CD4-positive, alpha-beta memory T cell (primary cell): ENCODE measurements at regions of chr3 and their contacts with region 1.

Region 1: GRCh38 chr3:45938864-45939263 is 4.4 kb upstream of the CXCR6 start:
- DNase-seq: peak; percentile 79 to 83 (median 80)
- H3K4me3 ChIP-seq: no peak overlapping the region
- H3K4me3 Mint-ChIP-seq: peak overlapping the region in 1 of 8 donors; percentile 14
- H3K27ac ChIP-seq: no peak overlapping the region
- H3K27ac Mint-ChIP-seq: peak overlapping the region in 3 of 7 donors; percentile 16 to 82 (median 77)
- H3K4me1 ChIP-seq: peaks cover 43% of the 10 kb centered on the region
- H3K4me1 Mint-ChIP-seq: peaks cover 27 to 52% (median 42%) of the 10 kb centered on the region in 4 donors
- H3K27me3 ChIP-seq: no peaks in the 10 kb centered on the region
- H3K27me3 Mint-ChIP-seq: no peaks in the 10 kb centered on the region

Region 2: DNA sequence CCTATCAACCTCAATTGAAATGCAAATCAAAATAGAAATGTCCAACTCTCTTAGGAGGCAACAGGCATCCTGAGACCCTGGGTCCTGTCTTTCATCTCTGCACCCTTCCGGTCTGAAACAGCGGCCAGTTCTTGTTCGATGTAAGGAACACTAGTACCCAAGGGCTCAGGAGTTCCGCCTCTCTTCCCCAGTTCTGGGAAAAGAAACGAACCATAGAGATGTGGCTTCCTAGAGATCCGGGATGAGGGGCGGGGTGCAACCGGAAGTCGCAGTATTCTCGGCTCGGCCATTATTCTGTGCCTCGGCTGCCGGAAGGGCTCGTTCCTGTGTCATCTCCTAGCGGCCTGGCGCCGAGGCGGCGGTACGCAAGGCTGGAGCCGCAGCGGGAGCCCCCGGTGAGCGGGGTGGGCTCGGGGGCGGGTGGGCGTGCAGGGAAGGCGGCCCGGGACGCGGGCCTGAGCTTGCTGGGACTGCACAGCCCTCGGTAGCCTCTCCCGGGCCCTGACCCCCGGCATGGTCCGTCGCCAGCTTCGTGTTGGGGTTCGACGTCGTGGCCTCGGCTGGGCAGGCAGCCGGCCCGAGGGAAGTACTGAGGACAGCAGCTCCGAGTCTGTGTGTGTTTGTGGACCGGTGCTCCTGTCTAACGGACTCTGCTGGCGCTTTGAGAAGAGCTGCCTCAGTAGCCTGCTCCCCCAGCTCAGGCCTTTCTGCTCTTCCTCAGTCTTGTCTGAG is 1313.9 kb before region 1 on chr3 and contains the start of gene ZNF197:
- CTCF ChIA-PET with region 1: no interaction called
- POLR2A ChIA-PET with region 1: no interaction called
- intact Hi-C with region 1: no loop called
- DNase-seq: peak; percentile 23 to 44 (median 42)
- H3K4me3 ChIP-seq: peak within 1 kb of the TSS; percentile 47 to 59
- H3K4me3 Mint-ChIP-seq: peak within 1 kb of the TSS; percentile 90 to 95 (median 92)
- H3K27ac ChIP-seq: peak within 1 kb of the TSS; percentile 49
- H3K27ac Mint-ChIP-seq: peak within 1 kb of the TSS; percentile 74 to 92 (median 87)
- H3K4me1 ChIP-seq: peaks cover 21% of the 10 kb centered on the region
- H3K4me1 Mint-ChIP-seq: peaks cover 20 to 47% (median 27%) of the 10 kb centered on the region in 4 donors
- H3K27me3 ChIP-seq: no peaks in the 10 kb centered on the region
- H3K27me3 Mint-ChIP-seq: no peaks in the 10 kb centered on the region
- total RNA-seq, gene ZNF197: 18.0 to 18.4 TPM

Region 3: DNA sequence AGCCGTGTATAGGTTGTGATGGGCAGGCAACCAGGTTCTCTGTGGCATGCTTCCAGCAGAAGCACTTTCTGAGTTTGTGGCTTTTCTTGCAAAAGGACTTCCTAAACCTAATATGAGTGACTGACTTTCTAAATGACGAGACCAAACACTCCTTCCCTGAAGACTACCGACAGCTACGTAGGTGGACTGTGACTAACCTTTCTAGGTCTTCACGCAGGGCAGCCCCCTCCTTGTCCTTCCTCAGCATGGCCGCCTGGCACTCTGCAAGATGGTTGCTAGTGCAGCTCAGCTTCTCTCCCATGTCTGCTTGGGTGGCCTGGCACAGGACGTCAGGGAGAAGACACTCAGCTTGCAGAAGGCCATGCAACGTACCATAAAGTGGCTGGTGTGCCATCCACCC is 25.3 kb after region 1 on chr3:
- CTCF ChIA-PET with region 1: interaction called, 153 read pairs
- POLR2A ChIA-PET with region 1: interaction called, 90 read pairs
- intact Hi-C with region 1: loop called (anchors 1 kb)
- DNase-seq: peak in 1 of 5 donors; percentile 60
- H3K4me3 ChIP-seq: no peak overlapping the region
- H3K4me3 Mint-ChIP-seq: peak overlapping the region in 6 of 8 donors; percentile 11 to 73 (median 38)
- H3K27ac ChIP-seq: peak overlapping the region; percentile 26
- H3K27ac Mint-ChIP-seq: peak overlapping the region; percentile 41 to 88 (median 75)
- H3K4me1 ChIP-seq: peaks cover 64% of the 10 kb centered on the region
- H3K4me1 Mint-ChIP-seq: peaks cover 35 to 81% (median 61%) of the 10 kb centered on the region in 4 donors
- H3K27me3 ChIP-seq: no peaks in the 10 kb centered on the region
- H3K27me3 Mint-ChIP-seq: no peaks in the 10 kb centered on the region

Region 4: GRCh38 chr3:45978006-45978761 is 39.3 kb after region 1 on chr3:
- CTCF ChIA-PET with region 1: interaction called, 10 read pairs
- POLR2A ChIA-PET with region 1: interaction called, 33 read pairs
- intact Hi-C with region 1: loop called (anchors 5 kb)
- DNase-seq: peak; percentile 38 to 73 (median 48)
- H3K4me3 ChIP-seq: peak overlapping the region in 1 of 2 donors; percentile 2
- H3K4me3 Mint-ChIP-seq: peak overlapping the region in 7 of 8 donors; percentile 38 to 93 (median 79)
- H3K27ac ChIP-seq: peak overlapping the region; percentile 10
- H3K27ac Mint-ChIP-seq: peak overlapping the region; percentile 31 to 99 (median 90)
- H3K4me1 ChIP-seq: peaks cover 91% of the 10 kb centered on the region
- H3K4me1 Mint-ChIP-seq: peaks cover 50 to 96% (median 74%) of the 10 kb centered on the region in 4 donors
- H3K27me3 ChIP-seq: no peaks in the 10 kb centered on the region
- H3K27me3 Mint-ChIP-seq: no peaks in the 10 kb centered on the region

Region 5: DNA sequence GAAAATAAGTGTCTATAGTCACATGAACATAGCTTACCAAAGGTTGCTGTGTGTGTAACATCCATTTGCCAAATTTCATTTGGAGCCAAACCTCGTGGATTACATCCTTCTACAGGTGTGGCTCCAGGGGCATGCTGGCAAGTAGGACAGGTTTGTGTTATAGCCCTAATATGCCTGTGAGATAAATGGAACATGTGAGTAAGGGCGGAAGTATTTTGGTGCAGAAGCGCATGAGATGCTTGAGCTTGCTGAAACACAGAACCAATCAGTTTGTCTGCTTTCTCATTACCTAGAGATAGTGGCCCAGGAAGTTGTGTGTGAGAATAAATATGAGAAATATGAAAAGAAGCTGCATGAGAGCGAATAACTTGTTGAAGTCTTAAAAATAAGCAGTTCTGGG is 110.3 kb after region 1 on chr3:
- CTCF ChIA-PET with region 1: interaction called, 5 read pairs
- POLR2A ChIA-PET with region 1: interaction called, 5 read pairs
- intact Hi-C with region 1: loop called (anchors 1 kb)
- DNase-seq: no peak
- H3K4me3 ChIP-seq: no peak overlapping the region
- H3K4me3 Mint-ChIP-seq: no peak overlapping the region
- H3K27ac ChIP-seq: no peak overlapping the region
- H3K27ac Mint-ChIP-seq: peak overlapping the region in 1 of 7 donors; percentile 47
- H3K4me1 ChIP-seq: peaks cover 23% of the 10 kb centered on the region
- H3K4me1 Mint-ChIP-seq: peaks cover 23 to 48% (median 30%) of the 10 kb centered on the region in 4 donors
- H3K27me3 ChIP-seq: no peaks in the 10 kb centered on the region
- H3K27me3 Mint-ChIP-seq: no peaks in the 10 kb centered on the region

Region 6: GRCh38 chr3:46070595-46071093 is 131.8 kb after region 1 on chr3:
- CTCF ChIA-PET with region 1: interaction called, 677 read pairs
- POLR2A ChIA-PET with region 1: interaction called, 57 read pairs
- intact Hi-C with region 1: loop called (anchors 2 kb)
- DNase-seq: peak in 4 of 5 donors; percentile 47 to 56 (median 49)
- H3K4me3 ChIP-seq: no peak overlapping the region
- H3K4me3 Mint-ChIP-seq: peak overlapping the region in 6 of 8 donors; percentile 19 to 65 (median 51)
- H3K27ac ChIP-seq: peak overlapping the region; percentile 13
- H3K27ac Mint-ChIP-seq: peak overlapping the region; percentile 15 to 91 (median 73)
- H3K4me1 ChIP-seq: peaks cover 62% of the 10 kb centered on the region
- H3K4me1 Mint-ChIP-seq: peaks cover 52 to 68% (median 58%) of the 10 kb centered on the region in 4 donors
- H3K27me3 ChIP-seq: no peaks in the 10 kb centered on the region
- H3K27me3 Mint-ChIP-seq: no peaks in the 10 kb centered on the region

Region 7: DNA sequence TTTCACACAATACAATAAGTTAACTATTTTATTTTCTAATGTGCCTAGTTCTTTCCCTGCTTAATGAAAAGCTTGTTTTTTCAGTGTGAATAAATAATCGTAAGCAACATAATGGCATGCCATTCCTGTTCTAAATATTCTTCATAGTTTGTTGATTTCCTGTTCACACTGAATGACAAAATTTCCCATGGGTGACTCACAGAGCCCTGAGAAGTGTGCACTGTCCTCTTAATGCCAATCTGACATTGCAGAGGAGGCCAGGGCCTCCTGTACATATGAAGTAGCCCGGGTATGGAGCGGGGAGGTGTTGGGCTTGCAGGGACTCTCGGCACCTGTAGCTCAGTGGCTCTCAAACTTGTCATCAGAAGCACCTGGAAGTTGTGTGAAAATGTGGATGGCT is 327.7 kb after region 1 on chr3:
- CTCF ChIA-PET with region 1: no interaction called
- POLR2A ChIA-PET with region 1: no interaction called
- intact Hi-C with region 1: no loop called
- DNase-seq: no peak
- H3K4me3 ChIP-seq: no peak overlapping the region
- H3K4me3 Mint-ChIP-seq: no peak overlapping the region
- H3K27ac ChIP-seq: no peak overlapping the region
- H3K27ac Mint-ChIP-seq: no peak overlapping the region
- H3K4me1 ChIP-seq: peaks cover 30% of the 10 kb centered on the region
- H3K4me1 Mint-ChIP-seq: peaks cover 14 to 44% (median 32%) of the 10 kb centered on the region in 4 donors
- H3K27me3 ChIP-seq: no peaks in the 10 kb centered on the region
- H3K27me3 Mint-ChIP-seq: no peaks in the 10 kb centered on the region